ENCODE measurements at regions of chr19 and their contacts with region 1.

Region 1: GRCh38 chr19:36687214-36688056 is at the start of gene ZNF567:
- DNase-seq: peak; percentile 99
- H3K4me3 ChIP-seq: peak within 1 kb of the TSS; percentile 95
- H3K27ac ChIP-seq: peak within 1 kb of the TSS; percentile 41
- H3K4me1 ChIP-seq: peaks cover 4% of the 10 kb centered on the region
- H3K27me3 ChIP-seq: no peaks in the 10 kb centered on the region
- CTCF ChIP-seq: no peak
- total RNA-seq, gene ZNF567: 2.7 to 4.6 TPM

Region 2: GRCh38 chr19:34926685-34927375 is 1760.6 kb before region 1 on chr19 and contains the start of gene ZNF30:
- intact Hi-C with region 1: no loop called
- DNase-seq: peak; percentile 89
- H3K4me3 ChIP-seq: peak within 1 kb of the TSS; percentile 61
- H3K27ac ChIP-seq: peak within 1 kb of the TSS; percentile 64
- H3K4me1 ChIP-seq: peaks cover 5% of the 10 kb centered on the region
- H3K27me3 ChIP-seq: no peaks in the 10 kb centered on the region
- CTCF ChIP-seq: no peak
- total RNA-seq, gene ZNF30: 1.3 to 2.1 TPM

Region 3: GRCh38 chr19:35140962-35141637 is 1546.3 kb before region 1 on chr19:
- intact Hi-C with region 1: no loop called
- DNase-seq: peak; percentile 98
- H3K4me3 ChIP-seq: peak overlapping the region; percentile 15
- H3K27ac ChIP-seq: peak overlapping the region; percentile 23
- H3K4me1 ChIP-seq: peaks cover 5% of the 10 kb centered on the region
- H3K27me3 ChIP-seq: peaks cover 7% of the 10 kb centered on the region
- CTCF ChIP-seq: no peak

Region 4: DNA sequence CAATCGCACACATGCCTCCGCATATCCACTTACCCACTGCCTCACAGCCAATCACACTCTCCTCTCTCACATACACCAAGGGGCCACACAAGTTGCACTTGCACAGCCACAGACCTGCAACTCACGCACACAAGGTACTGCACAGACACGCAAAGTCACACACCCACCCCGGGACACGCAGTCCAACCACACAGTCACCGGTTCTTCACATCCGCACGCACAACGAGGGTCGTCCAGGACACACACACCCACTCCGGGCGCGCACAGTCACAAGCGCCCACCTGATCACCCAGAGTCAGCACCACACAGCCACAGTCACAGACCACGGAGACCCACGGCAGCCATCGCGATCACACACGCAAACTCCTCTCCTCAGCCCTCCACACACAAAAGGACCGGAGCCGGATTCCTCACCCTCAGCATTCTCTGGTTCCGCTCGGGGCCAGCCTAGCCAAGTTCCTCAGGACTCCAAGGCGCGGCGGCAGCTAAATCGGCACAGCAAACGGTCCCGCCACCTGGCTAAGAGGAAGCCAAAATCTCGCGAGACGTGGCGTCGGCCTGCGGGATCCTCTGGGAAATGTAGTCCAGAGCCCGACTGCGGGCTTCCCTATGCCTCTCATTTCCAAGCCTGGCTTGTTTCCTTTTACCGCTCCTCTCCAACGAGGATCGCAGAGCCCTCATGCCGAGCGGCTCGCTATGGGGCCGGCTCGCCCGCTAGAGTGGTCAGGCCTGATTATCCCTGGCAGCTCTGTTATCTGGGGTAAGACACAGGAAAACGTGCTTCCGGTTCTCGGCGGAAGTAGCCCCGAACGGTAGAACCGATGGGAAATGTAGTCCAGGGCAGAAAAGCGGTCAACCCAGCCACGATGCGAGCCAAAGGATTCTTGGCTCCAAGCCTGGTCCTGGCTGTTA is 85.1 kb after region 1 on chr19 and contains the start of gene ZNF850:
- intact Hi-C with region 1: no loop called
- DNase-seq: peak; percentile 96
- H3K4me3 ChIP-seq: peak within 1 kb of the TSS; percentile 93
- H3K27ac ChIP-seq: peak within 1 kb of the TSS; percentile 66
- H3K4me1 ChIP-seq: no peaks in the 10 kb centered on the region
- H3K27me3 ChIP-seq: no peaks in the 10 kb centered on the region
- CTCF ChIP-seq: no peak
- total RNA-seq, gene ZNF850: 1.1 to 3.1 TPM

Region 5: GRCh38 chr19:36850559-36851442 is 163.4 kb after region 1 on chr19 and contains the start of gene ZNF345:
- intact Hi-C with region 1: loop called (anchors 5 kb)
- DNase-seq: peak; percentile 93
- H3K4me3 ChIP-seq: peak within 1 kb of the TSS; percentile 72
- H3K27ac ChIP-seq: peak within 1 kb of the TSS; percentile 90
- H3K4me1 ChIP-seq: peaks cover 5% of the 10 kb centered on the region
- H3K27me3 ChIP-seq: no peaks in the 10 kb centered on the region
- CTCF ChIP-seq: no peak
- total RNA-seq, gene ZNF345: 2.3 to 2.9 TPM

Region 6: GRCh38 chr19:36891768-36892357 is 204.4 kb after region 1 on chr19:
- intact Hi-C with region 1: no loop called
- DNase-seq: no peak
- H3K4me3 ChIP-seq: no peak overlapping the region
- H3K27ac ChIP-seq: no peak overlapping the region
- H3K4me1 ChIP-seq: no peaks in the 10 kb centered on the region
- H3K27me3 ChIP-seq: no peaks in the 10 kb centered on the region
- CTCF ChIP-seq: no peak